Activated T-helper 2 cell treated with anti-CD3 and anti-CD28 coated beads, Interferon-gamma antibody, Interleukin-2, Interleukin-4, amounts not matched to agents 10 μg/mL and 5 μg/mL and 100 μg/mL, durations not matched to agents 14 hours and 24 hours and 36 hours (primary cell): ENCODE measurements at regions of chr18 and their contacts with region 1.

Region 1: DNA sequence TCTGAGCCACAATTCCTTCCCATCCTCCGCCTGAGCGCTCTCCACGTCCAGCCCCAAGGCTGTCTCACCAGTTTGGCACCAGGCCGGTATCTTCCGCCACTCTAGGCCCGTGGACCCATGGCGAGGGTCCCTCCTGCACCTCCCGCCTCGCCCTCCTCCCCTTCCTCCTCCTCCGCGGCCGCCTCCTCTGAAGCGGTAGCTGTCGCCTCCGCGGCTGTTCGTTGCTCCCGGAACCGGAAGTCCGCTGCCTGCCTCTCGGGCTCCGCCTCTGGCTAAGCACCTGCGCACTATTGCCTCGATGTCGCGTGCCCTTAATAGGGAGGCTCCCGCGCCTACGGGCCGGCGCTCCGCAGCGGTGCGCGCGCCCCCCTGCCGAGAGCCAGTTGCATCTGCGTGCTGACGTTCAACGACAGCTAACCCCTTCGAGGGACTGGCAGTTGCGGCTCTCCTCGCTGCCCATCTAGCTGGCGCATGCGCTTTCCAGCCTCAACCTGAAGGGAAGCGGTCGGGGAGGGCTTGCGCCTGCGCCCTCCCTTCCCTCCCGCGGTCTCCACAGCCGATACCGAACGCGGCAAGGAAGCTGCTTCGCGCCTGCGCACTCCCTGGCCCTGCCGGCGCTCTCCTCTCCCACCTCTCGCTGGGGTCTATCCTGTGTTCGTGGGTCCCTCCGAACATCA is at the start of gene MBD1:
- DNase-seq: peak; percentile 95
- H3K4me3 Mint-ChIP-seq: peak within 1 kb of the TSS; percentile 88
- H3K27ac Mint-ChIP-seq: peak within 1 kb of the TSS; percentile 90
- H3K4me1 Mint-ChIP-seq: peaks cover 34% of the 10 kb centered on the region
- H3K27me3 Mint-ChIP-seq: no peaks in the 10 kb centered on the region
- total RNA-seq, gene MBD1: 78.4 and 79.7 TPM in 2 replicates

Region 2: DNA sequence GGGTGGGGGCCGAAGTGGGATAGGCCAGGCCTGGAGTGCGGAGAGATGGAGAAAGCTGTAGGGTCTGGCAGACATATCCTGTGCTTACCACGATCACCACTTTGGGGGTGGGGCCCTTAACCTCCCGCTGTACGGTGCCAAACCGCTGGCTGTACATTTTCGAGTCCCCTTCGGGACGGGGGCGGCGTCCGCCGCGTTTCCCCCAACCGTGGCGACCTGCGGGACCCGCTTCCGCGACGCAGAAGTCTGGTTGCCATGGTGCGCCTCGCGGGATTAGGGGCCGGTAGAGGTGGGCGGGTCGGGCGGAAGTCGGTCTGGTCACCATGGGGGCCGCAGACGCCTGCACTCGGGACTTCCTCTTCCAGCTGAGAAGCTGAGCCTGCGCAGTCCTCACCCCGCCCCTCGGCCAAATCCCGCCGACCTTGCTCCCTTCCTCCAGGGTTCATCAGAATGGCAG is 15.2 kb before region 1 on chr18 and contains the start of gene CFAP53:
- intact Hi-C with region 1: loop called (anchors 1 kb)
- DNase-seq: peak; percentile 79
- H3K4me3 Mint-ChIP-seq: peak within 1 kb of the TSS; percentile 80
- H3K27ac Mint-ChIP-seq: peak within 1 kb of the TSS; percentile 62
- H3K4me1 Mint-ChIP-seq: peaks cover 11% of the 10 kb centered on the region
- H3K27me3 Mint-ChIP-seq: peaks cover 7% of the 10 kb centered on the region
- total RNA-seq, gene CFAP53: 0.25 and 0.51 TPM in 2 replicates

Region 3: DNA sequence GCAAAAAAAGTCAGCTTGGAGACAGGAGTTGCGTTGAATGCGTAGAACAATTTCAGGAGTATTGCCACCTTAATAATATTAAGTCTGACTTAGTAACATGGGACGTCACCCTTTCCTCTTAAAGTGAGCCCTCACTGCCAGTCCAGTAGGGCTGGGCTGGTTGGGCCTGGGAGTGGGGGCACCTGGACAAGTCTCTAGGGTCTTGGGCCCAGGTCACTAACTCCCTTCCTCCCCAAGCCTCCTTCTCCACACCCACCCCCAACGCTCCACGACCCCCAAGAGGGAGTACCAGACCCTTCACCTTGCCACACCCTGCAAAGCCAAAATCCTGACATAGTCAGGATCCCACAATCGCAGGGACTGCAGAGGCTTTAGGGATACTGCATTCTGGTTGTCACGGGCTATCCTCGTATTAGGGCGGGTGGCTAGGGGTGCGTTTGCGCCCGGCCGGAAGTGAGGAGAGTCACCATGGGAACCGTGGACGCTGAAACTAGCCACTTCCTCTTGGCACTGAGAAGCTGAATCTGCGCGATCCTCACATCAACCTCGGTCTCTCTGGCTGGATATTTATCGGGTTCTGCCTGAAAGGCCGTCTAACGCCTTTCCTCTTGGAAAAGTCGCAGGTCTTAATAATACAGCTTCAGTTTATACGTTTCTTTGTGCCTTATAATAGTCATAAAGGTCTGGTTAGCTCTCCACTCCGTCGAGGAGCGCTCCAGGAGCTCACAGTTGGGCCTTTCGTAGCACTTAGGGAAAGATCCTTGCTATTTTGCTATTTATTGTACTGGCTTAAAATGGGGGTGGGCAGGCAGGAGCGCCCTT is 16.4 kb after region 1 on chr18:
- intact Hi-C with region 1: loop called (anchors 1 kb)
- DNase-seq: peak; percentile 72
- H3K4me3 Mint-ChIP-seq: peak overlapping the region; percentile 62
- H3K27ac Mint-ChIP-seq: no peak overlapping the region
- H3K4me1 Mint-ChIP-seq: peaks cover 12% of the 10 kb centered on the region
- H3K27me3 Mint-ChIP-seq: peaks cover 31% of the 10 kb centered on the region

Region 4: DNA sequence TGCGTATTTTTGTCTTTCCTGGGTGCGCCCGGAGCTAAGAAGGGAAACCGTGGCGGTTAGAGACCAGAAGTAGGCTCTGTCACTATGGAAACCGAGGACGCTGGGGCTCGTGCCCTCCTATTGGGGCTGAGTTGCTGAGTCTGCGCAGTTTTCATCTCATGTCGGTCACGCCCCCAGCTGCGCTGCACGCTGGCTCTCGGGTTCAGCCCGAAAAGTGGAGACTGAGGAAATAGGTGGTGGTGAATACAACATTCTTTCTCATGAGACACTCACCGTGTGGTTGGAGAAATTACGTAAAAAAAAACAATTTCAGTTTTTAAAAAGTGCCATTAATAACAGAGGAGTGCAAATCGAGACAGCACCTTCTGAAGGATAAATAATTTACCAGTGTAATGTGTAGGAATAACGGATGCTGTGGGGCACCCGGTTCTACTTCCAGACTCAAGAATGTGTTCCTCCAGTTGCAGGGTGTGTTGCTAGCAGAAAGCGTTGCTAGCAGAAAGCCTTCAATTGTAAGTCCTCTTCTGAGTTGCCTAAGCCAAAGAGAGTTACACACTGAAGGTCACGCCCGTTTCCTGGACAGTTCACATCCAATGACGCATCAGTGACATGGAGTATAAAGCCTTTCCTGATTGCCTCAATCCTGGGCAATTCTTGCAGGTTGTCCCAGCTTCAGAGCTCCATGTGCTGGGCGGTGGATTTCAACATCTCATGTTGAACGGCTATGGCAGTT is 26.5 kb after region 1 on chr18:
- intact Hi-C with region 1: loop called (anchors 1 kb)
- DNase-seq: peak; percentile 87
- H3K4me3 Mint-ChIP-seq: peak overlapping the region; percentile 89
- H3K27ac Mint-ChIP-seq: peak overlapping the region; percentile 57
- H3K4me1 Mint-ChIP-seq: peaks cover 21% of the 10 kb centered on the region
- H3K27me3 Mint-ChIP-seq: peaks cover 17% of the 10 kb centered on the region

Region 5: DNA sequence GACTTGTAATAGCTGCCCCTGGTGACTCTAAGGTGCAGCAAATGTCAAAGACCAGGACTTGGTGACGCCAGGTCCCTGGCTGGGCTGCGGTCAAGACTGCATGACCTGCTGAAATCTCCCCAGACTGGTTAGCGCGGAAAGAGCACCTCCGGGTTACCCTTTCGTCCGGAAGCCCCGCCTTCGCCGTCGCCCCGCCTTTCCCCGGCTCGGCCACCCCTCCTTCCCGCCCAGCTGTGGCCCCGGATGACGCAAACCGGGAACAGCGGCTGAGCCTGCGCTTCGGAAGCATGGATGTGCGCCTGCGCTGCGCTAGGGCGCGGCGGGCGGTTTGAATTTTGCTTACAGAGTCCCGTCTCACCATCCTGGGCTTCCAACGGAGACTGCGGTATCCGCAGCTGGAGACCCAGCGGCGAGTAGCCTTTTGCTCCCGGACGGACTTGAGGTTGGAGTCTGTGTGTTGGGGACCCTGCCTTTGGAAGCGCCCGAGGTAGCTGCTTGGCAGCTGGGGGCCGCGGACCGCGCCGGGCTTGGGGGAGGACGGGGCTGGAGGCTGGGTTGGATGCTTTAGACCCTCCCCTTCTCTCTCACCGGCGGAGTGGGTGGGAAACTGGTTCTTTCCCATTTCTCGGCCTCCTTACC is 93.4 kb after region 1 on chr18 and contains the start of gene SKA1:
- intact Hi-C with region 1: loop called (anchors 1 kb)
- DNase-seq: peak; percentile 87
- H3K4me3 Mint-ChIP-seq: peak within 1 kb of the TSS; percentile 87
- H3K27ac Mint-ChIP-seq: peak within 1 kb of the TSS; percentile 86
- H3K4me1 Mint-ChIP-seq: peaks cover 13% of the 10 kb centered on the region
- H3K27me3 Mint-ChIP-seq: peaks cover 4% of the 10 kb centered on the region
- total RNA-seq, gene SKA1: 23.5 and 23.6 TPM in 2 replicates

Region 6: DNA sequence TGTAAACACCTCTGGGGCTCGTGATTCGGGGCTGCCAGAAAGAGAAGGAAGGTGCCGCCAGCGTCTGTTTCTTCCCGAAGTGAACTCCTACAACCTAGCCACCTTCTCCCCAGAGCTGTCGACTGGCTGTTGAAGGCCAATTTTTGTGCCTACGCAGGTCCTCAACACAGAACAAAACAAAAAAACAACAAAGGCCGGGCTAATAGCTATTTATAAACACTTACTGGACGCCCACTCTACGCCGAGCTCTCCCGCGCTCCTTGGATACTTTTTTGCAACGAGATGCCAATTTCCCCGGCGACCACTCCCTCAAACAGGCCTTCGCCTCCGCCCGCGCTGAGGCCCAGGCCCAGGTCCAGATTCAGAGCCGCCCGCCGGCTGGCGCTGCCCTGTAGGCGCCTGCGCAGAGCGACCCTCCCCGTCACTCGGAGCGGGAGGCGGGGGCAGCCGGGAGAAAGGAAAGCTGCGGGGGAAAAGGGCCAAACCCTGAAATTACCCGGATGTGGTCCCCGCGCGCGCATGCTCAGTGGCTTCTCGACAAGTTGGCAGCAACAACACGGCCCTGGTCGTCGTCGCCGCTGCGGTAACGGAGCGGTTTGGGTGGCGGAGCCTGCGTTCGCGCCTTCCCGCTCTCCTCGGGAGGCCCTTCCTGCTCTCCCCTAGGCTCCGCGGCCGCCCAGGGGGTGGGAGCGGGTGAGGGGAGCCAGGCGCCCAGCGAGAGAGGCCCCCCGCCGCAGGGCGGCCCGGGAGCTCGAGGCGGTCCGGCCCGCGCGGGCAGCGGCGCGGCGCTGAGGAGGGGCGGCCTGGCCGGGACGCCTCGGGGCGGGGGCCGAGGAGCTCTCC is 748.5 kb after region 1 on chr18 and contains the start of gene SMAD4:
- intact Hi-C with region 1: loop called (anchors 2 kb)
- DNase-seq: peak; percentile 97
- H3K4me3 Mint-ChIP-seq: peak within 1 kb of the TSS; percentile 97
- H3K27ac Mint-ChIP-seq: peak within 1 kb of the TSS; percentile 92
- H3K4me1 Mint-ChIP-seq: peaks cover 44% of the 10 kb centered on the region
- H3K27me3 Mint-ChIP-seq: no peaks in the 10 kb centered on the region
- total RNA-seq, gene SMAD4: 73.0 and 77.1 TPM in 2 replicates